ENCODE measurements at regions of chr17 and their contacts with region 1.

Region 1: DNA sequence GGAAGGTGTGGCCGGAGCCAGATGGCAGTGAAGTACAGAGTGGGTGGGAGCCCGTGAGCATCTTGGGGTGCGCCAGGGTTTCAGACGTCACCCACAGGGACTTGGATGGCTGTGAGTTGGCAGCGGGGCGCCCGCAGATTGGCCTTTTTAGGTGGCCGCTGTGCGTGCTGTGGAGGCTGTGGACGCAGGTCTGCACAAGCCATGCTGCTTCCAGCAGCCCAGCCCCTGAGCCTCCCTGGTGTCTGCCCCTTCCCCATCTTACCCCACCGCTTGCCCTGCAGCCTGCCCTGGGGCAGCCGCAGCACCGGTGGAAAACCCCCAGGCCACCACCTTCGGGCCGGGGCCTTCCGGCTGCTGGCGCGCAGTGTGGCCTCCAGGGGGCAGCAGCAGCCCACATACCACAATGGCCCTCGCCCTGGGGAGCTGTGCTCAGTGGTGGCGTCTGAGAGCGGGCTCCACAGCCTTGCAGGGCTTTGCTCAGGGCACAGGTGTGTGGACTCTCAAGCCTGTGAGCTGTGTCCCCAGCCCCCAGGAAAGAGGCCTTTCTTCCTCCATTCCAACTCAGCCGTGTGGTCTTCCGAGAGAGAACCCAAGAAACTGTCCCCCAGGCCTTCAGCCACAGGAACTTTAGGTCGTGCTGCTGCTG is 11.8 kb downstream of the ENDOV start:
- DNase-seq: peak; percentile 93
- ATAC-seq: peak; percentile 90
- H3K4me3 Mint-ChIP-seq: no peak overlapping the region
- H3K27ac Mint-ChIP-seq: no peak overlapping the region
- H3K4me1 Mint-ChIP-seq: 0 out of 2 replicates have a peak, but pooled peaks cover 3% of the 10 kb centered on the region
- H3K27me3 Mint-ChIP-seq: no peaks in the 10 kb centered on the region; the same call in 1 of the 2 replicates
- CTCF ChIP-seq: peak; percentile 93

Region 2: GRCh38 chr17:80443916-80444643 is 17.3 kb after region 1 on chr17:
- CTCF ChIA-PET with region 1: interaction called, 17 read pairs
- POLR2A ChIA-PET with region 1: no interaction called
- DNase-seq: peak; percentile 53
- ATAC-seq: peak; percentile 42
- H3K4me3 Mint-ChIP-seq: no peak overlapping the region
- H3K27ac Mint-ChIP-seq: no peak overlapping the region
- H3K4me1 Mint-ChIP-seq: no peaks in the 10 kb centered on the region; the same call in 1 of the 2 replicates
- H3K27me3 Mint-ChIP-seq: peaks cover 8% of the 10 kb centered on the region
- CTCF ChIP-seq: no peak

Region 3: DNA sequence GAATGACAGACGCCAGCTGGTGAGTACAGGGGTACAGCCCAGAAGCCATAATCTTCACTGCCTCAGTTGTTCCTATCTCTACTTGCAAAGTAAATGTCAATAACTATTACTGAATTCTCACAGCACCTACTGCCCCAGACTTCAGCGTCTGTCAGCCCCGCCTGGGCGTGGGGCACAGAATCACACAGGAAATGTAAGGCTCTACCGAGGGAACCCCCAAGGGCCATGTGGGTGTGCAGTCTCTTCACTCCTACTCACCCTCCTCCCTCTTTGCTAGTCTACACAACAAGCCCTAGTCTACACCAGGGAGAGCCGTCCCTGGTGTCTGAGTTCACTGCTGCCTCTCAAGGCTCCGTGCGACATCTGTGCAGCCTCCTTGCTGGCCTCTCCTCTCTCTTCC is 45.1 kb after region 1 on chr17:
- CTCF ChIA-PET with region 1: interaction called, 23 read pairs
- POLR2A ChIA-PET with region 1: no interaction called
- DNase-seq: no peak
- ATAC-seq: no peak
- H3K4me3 Mint-ChIP-seq: no peak overlapping the region
- H3K27ac Mint-ChIP-seq: no peak overlapping the region
- H3K4me1 Mint-ChIP-seq: peaks cover 5% of the 10 kb centered on the region
- H3K27me3 Mint-ChIP-seq: peaks cover 75% of the 10 kb centered on the region
- CTCF ChIP-seq: no peak

Region 4: DNA sequence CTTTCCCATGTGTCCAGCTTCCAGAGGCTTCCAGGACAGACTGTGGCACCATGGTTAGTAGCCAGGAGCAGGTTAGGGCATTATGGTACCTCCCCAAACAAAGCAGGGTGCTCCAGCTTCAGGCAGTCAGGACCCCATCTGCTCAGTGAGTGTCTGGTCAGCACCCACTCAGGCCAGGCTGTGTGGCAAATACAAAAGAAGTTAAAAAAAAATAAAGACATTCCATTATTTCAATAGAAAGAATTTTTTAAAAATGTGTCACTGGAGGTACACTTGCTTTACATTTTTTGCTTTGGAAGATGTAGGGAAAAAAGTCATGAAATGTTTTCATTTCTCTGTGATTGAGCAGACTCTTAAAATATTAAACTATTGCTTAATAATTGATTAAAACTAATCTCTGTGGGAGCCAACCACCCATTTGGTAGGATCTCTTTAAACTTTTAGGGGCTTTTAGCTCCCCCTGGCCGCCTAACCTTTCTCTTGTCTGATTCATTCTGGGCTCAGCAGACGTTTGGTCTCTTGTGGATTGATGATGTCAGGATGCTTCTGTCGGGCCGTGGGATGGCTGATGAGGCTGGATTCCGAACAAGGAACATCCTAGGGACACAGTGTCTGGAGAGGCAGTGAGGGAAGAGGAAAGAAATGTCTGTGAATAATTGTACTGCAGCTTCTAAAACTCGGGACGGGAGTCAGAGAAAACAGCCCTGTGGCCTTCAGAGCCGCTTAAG is 78.0 kb after region 1 on chr17:
- CTCF ChIA-PET with region 1: interaction called, 20 read pairs
- POLR2A ChIA-PET with region 1: no interaction called
- DNase-seq: no peak
- ATAC-seq: no peak
- H3K4me3 Mint-ChIP-seq: no peak overlapping the region
- H3K27ac Mint-ChIP-seq: no peak overlapping the region
- H3K4me1 Mint-ChIP-seq: no peaks in the 10 kb centered on the region
- H3K27me3 Mint-ChIP-seq: no peaks in the 10 kb centered on the region
- CTCF ChIP-seq: no peak

Region 5: GRCh38 chr17:80575057-80575875 is 148.5 kb after region 1 on chr17:
- CTCF ChIA-PET with region 1: interaction called, 12 read pairs
- POLR2A ChIA-PET with region 1: no interaction called
- DNase-seq: peak; percentile 94
- ATAC-seq: peak; percentile 99
- H3K4me3 Mint-ChIP-seq: no peak overlapping the region
- H3K27ac Mint-ChIP-seq: no peak overlapping the region
- H3K4me1 Mint-ChIP-seq: 0 out of 2 replicates have a peak, but pooled peaks cover 4% of the 10 kb centered on the region
- H3K27me3 Mint-ChIP-seq: no peaks in the 10 kb centered on the region; the same call in none of the 2 replicates
- CTCF ChIP-seq: peak; percentile 100

Measured in WTC11 (cell line).